ENCODE measurements at regions of chr11 and their contacts with region 1.

Region 1: DNA sequence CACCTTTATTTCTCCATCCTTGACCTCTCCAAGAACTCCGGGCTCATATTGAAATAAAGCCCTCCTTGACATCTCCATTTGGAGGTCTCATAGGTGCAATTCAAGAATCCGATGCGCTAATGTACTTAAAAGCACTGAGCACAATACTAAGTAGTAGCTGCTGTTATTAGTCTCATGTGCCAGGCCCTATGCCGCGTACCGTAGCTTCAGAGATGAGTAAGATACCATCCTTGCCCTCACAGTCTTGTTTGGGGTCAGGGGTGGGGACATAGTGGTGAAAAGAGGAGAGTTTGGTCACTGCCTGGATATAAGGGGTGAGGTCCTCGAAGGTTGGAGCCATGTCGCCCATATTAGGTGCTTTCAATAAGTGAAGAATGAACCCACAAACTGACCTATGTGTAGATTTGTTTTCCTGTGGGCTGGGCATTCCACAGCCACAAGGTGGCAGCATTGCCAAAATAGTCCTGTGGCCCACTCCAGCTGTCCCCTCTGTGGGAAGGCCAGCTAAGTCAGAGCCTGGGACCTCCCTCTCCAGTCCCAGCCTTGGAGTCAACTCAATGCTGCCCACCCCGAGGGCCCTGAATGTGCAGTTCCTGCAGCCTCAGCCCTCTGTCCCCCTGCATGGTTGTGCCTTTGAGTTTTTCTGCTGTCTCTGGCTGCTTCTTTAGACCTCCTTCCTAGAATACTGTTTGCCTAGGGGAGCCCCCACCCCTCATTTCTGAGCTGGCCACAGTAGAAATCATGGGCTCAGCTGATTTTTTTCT is 6.5 kb downstream of the DCPS start:
- DNase-seq: peak in 1 of 2 donors; percentile 83
- H3K4me3 ChIP-seq: no peak overlapping the region
- H3K27ac ChIP-seq: no peak overlapping the region
- H3K4me1 ChIP-seq: no peaks in the 10 kb centered on the region
- H3K27me3 ChIP-seq: no peaks in the 10 kb centered on the region
- CTCF ChIP-seq: peak; percentile 78 to 90 (median 80)

Region 2: GRCh38 chr11:126348859-126349582 is 38.6 kb after region 1 on chr11:
- intact Hi-C with region 1: loop called (anchors 2 kb)
- DNase-seq: no peak
- H3K4me3 ChIP-seq: no peak overlapping the region
- H3K27ac ChIP-seq: peak overlapping the region; percentile 44 to 75
- H3K4me1 ChIP-seq: peaks cover 20 to 47% of the 10 kb centered on the region in 2 donors
- H3K27me3 ChIP-seq: no peaks in the 10 kb centered on the region
- CTCF ChIP-seq: no peak

Region 3: DNA sequence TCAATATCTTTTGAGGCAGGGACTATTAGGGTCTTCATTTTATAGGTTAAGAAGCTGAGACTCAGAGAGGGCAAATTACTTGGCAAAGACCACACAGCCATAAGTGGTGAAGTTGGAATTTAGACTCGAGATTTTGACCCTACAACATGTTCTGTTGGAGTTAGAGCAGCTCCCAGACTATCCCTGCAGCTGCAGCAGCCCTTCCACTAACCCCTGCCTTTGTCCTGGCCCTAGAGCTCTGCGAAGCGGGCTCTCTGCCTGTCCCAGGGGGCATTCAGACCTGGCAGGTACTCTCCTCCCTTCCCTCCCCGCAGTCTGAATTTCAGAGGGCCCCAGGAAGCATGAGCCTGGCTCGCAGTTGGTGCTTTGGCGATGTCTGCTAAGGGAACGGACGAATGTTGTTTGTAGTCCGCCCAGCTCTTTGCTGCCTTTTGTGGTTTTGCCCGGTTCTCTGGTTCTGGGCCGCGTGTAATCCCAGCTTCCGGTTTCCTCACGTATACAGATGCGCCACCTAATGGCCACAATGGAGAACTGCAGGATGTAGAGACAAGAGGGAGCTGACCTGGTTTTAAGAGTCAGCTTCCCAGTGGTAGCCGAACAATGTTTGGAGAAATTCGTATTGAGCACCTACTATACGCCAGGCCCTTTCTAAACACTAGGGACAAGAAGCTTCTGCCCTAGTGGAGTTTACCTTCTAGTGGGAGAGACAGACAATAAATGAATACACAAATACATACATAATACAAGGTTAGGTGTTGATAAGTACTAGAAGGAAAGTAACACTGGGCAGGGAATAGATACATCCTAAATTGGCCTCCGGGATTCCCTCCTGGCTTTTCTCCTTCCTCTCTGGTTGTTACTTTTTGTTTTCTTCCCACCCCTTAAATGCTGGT is 170.2 kb after region 1 on chr11:
- intact Hi-C with region 1: loop called (anchors 1 kb)
- DNase-seq: peak; percentile 24 to 91
- H3K4me3 ChIP-seq: peak overlapping the region in 1 of 2 donors; percentile 52
- H3K27ac ChIP-seq: peak overlapping the region; percentile 69 to 73
- H3K4me1 ChIP-seq: no peaks in the 10 kb centered on the region
- H3K27me3 ChIP-seq: no peaks in the 10 kb centered on the region
- CTCF ChIP-seq: peak; percentile 89 to 92 (median 91)